IMR-90 (cell line): ENCODE measurements at regions of chr5 and their contacts with region 1.

Region 1: GRCh38 chr5:45038366-45038987 is 229.7 kb downstream of the MRPS30 start:
- DNase-seq: peak; percentile 0
- ATAC-seq: no peak
- H3K4me3 ChIP-seq: no peak overlapping the region
- H3K27ac ChIP-seq: no peak overlapping the region
- H3K4me1 ChIP-seq: no peaks in the 10 kb centered on the region
- H3K27me3 ChIP-seq: no peaks in the 10 kb centered on the region
- CTCF ChIP-seq: peak; percentile 45
- POLR2A ChIP-seq: no peak
- RAD21 ChIP-seq: peak; percentile 49

Region 2: GRCh38 chr5:45521067-45521466 is 482.6 kb after region 1 on chr5:
- CTCF ChIA-PET with region 1: no interaction called
- POLR2A ChIA-PET with region 1: no interaction called
- dilution Hi-C with region 1: no loop called
- in situ Hi-C with region 1: no loop called
- intact Hi-C with region 1: loop called (anchors 1 kb)
- DNase-seq: peak; percentile 1
- ATAC-seq: no peak
- H3K4me3 ChIP-seq: no peak overlapping the region
- H3K27ac ChIP-seq: no peak overlapping the region
- H3K4me1 ChIP-seq: no peaks in the 10 kb centered on the region
- H3K27me3 ChIP-seq: no peaks in the 10 kb centered on the region
- CTCF ChIP-seq: peak; percentile 44
- POLR2A ChIP-seq: no peak
- RAD21 ChIP-seq: peak; percentile 62

Region 3: GRCh38 chr5:45696206-45696836 is 657.8 kb after region 1 on chr5 and contains the start of gene HCN1:
- CTCF ChIA-PET with region 1: no interaction called
- POLR2A ChIA-PET with region 1: no interaction called
- dilution Hi-C with region 1: no loop called
- in situ Hi-C with region 1: no loop called
- intact Hi-C with region 1: loop called (anchors 2 kb)
- DNase-seq: peak; percentile 32
- ATAC-seq: peak; percentile 97
- H3K4me3 ChIP-seq: no peak within 1 kb of the TSS
- H3K27ac ChIP-seq: no peak within 1 kb of the TSS
- H3K4me1 ChIP-seq: no peaks in the 10 kb centered on the region
- H3K27me3 ChIP-seq: no peaks in the 10 kb centered on the region
- CTCF ChIP-seq: peak; percentile 64
- POLR2A ChIP-seq: no peak
- RAD21 ChIP-seq: peak; percentile 50
- total RNA-seq, gene HCN1: not detected in 2 replicates

Region 4: GRCh38 chr5:45774528-45774927 is 736.1 kb after region 1 on chr5:
- CTCF ChIA-PET with region 1: no interaction called
- POLR2A ChIA-PET with region 1: no interaction called
- dilution Hi-C with region 1: no loop called
- in situ Hi-C with region 1: no loop called
- intact Hi-C with region 1: loop called (anchors 5 kb)
- DNase-seq: no peak
- ATAC-seq: no peak
- H3K4me3 ChIP-seq: no peak overlapping the region
- H3K27ac ChIP-seq: no peak overlapping the region
- H3K4me1 ChIP-seq: no peaks in the 10 kb centered on the region
- H3K27me3 ChIP-seq: no peaks in the 10 kb centered on the region
- CTCF ChIP-seq: no peak
- POLR2A ChIP-seq: no peak
- RAD21 ChIP-seq: no peak